ENCODE measurements at regions of chr13 and their contacts with region 1.

Region 1: DNA sequence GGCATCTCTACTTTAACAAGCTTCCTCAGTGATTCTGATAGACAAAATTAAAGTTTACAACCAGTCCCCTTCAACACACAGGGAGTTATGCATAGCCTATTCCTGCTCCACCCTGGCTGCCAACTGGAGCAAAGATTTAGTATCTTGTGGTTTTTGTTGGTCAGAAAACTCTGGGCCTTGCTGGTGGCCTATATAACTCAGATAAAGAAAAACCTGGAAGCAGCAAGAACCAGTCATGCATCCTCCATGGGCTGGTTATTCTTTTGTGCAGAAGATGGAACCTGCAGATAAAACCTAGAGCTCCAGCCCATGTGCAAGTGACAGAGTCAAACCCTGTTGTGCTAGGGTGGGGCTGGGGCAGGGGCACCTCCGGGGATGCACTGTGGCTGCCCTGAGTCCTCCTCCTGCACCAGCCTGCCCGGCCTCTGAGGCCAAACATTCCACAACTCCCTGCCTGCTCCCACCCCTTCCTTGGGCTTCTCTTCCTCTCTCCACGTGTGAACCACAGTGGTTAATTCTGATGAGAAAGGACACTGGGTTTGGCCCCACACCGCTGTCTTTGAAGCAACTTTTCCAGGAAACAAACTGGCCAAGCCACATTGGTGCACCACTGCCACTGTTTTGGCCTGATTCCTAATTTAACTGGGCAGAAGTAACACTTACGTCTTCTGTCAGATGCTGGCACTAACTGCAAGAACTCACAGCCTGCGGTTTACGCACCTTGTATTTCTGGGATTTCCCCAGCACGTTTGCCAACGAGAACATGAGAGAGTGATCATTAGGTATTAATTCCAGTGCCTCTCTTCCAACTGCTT is 23.3 kb upstream of the GGACT start:
- DNase-seq: peak; percentile 61 to 65
- ATAC-seq: peak; percentile 65 to 81 (median 77)
- H3K4me3 ChIP-seq: no peak overlapping the region
- H3K4me3 Mint-ChIP-seq: peak overlapping the region; percentile 78
- H3K27ac ChIP-seq: peak overlapping the region; percentile 51
- H3K27ac Mint-ChIP-seq: peak overlapping the region; percentile 84 to 96
- H3K4me1 ChIP-seq: peaks cover 38% of the 10 kb centered on the region
- H3K4me1 Mint-ChIP-seq: peaks cover 61 to 64% of the 10 kb centered on the region in 2 donors
- H3K27me3 ChIP-seq: no peaks in the 10 kb centered on the region
- H3K27me3 Mint-ChIP-seq: no peaks in the 10 kb centered on the region
- CTCF ChIP-seq: no peak

Region 2: GRCh38 chr13:100633461-100633860 is 21.6 kb after region 1 on chr13:
- intact Hi-C with region 1: loop called (anchors 1 kb)
- DNase-seq: no peak
- ATAC-seq: no peak
- H3K4me3 ChIP-seq: no peak overlapping the region
- H3K4me3 Mint-ChIP-seq: no peak overlapping the region
- H3K27ac ChIP-seq: no peak overlapping the region
- H3K27ac Mint-ChIP-seq: no peak overlapping the region
- H3K4me1 ChIP-seq: peaks cover 11% of the 10 kb centered on the region
- H3K4me1 Mint-ChIP-seq: peaks cover 30 to 31% of the 10 kb centered on the region in 2 donors
- H3K27me3 ChIP-seq: no peaks in the 10 kb centered on the region
- H3K27me3 Mint-ChIP-seq: no peaks in the 10 kb centered on the region
- CTCF ChIP-seq: no peak